ENCODE measurements at regions of chr16 and their contacts with region 1.

Region 1: GRCh38 chr16:3525951-3526350 is 25.1 kb downstream of the CLUAP1 start:
- DNase-seq: no peak
- ATAC-seq: no peak
- H3K4me3 ChIP-seq: no peak overlapping the region
- H3K27ac ChIP-seq: no peak overlapping the region
- H3K4me1 ChIP-seq: no peaks in the 10 kb centered on the region
- H3K27me3 ChIP-seq: no peaks in the 10 kb centered on the region
- CTCF ChIP-seq: no peak
- POLR2A ChIP-seq: no peak
- RAD21 ChIP-seq: no peak

Region 2: GRCh38 chr16:3609895-3610697 is 84.1 kb after region 1 on chr16:
- CTCF ChIA-PET with region 1: no interaction called
- POLR2A ChIA-PET with region 1: no interaction called
- dilution Hi-C with region 1: no loop called
- in situ Hi-C with region 1: no loop called
- intact Hi-C with region 1: loop called (anchors 2 kb)
- DNase-seq: no peak
- ATAC-seq: no peak
- H3K4me3 ChIP-seq: peak overlapping the region; percentile 81; the same call in 1 of the 2 replicates
- H3K27ac ChIP-seq: no peak overlapping the region
- H3K4me1 ChIP-seq: peaks cover 5% of the 10 kb centered on the region
- H3K27me3 ChIP-seq: no peaks in the 10 kb centered on the region
- CTCF ChIP-seq: no peak
- POLR2A ChIP-seq: no peak
- RAD21 ChIP-seq: no peak

Region 3: GRCh38 chr16:3690470-3690928 is 164.5 kb after region 1 on chr16:
- CTCF ChIA-PET with region 1: no interaction called
- POLR2A ChIA-PET with region 1: no interaction called
- dilution Hi-C with region 1: no loop called
- in situ Hi-C with region 1: no loop called
- intact Hi-C with region 1: loop called (anchors 5 kb)
- DNase-seq: peak; percentile 94
- ATAC-seq: peak; percentile 98
- H3K4me3 ChIP-seq: no peak overlapping the region
- H3K27ac ChIP-seq: no peak overlapping the region
- H3K4me1 ChIP-seq: peaks cover 6% of the 10 kb centered on the region
- H3K27me3 ChIP-seq: no peaks in the 10 kb centered on the region
- CTCF ChIP-seq: peak; percentile 96
- POLR2A ChIP-seq: no peak
- RAD21 ChIP-seq: peak; percentile 84